IMR-90 (cell line): ENCODE measurements at regions of chr4 and their contacts with region 1.

Region 1: DNA sequence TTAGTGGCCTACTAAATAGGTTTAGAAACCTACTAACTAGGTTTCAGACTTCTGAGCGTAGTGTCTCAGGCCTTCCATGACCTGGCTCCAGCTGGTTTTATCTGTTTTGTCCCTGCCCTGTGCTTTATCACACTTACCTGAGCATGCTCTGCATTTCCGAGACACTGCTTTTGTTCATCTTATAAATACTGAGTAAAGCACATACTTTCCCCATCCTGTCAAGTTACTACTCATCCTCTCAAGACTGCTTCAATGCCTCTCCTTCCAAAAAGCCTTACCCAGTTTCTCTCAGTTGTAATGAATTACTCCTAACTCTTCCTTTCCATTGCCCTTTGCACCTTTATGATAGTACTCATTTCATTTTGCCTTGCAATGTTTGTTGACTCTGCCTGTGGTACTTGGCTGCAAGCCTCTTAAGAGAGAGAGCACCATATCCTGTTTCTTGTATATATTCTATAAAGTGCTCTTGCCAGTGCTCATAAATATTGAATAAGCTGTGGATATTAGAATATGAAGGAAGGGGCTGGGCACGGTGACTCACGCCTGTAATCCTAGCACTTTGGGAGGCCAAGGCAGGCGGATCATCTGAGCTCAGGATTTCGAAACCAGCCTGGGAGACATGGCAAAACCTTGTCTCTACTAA is 34.4 kb downstream of the SLAIN2 start:
- DNase-seq: peak; percentile 96
- ATAC-seq: peak; percentile 94
- H3K4me3 ChIP-seq: no peak overlapping the region
- H3K27ac ChIP-seq: peak overlapping the region; percentile 56; the same call in 1 of the 2 replicates
- H3K4me1 ChIP-seq: peaks cover 2% of the 10 kb centered on the region; the same call in 1 of the 2 replicates
- H3K27me3 ChIP-seq: no peaks in the 10 kb centered on the region
- CTCF ChIP-seq: no peak
- POLR2A ChIP-seq: no peak
- RAD21 ChIP-seq: no peak

Region 2: GRCh38 chr4:47852136-47852535 is 523.6 kb before region 1 on chr4:
- CTCF ChIA-PET with region 1: no interaction called
- POLR2A ChIA-PET with region 1: no interaction called
- dilution Hi-C with region 1: no loop called
- in situ Hi-C with region 1: loop called (anchors 25 kb)
- intact Hi-C with region 1: loop called (anchors 5 kb)
- DNase-seq: peak; percentile 92
- ATAC-seq: peak; percentile 86
- H3K4me3 ChIP-seq: no peak overlapping the region
- H3K27ac ChIP-seq: no peak overlapping the region
- H3K4me1 ChIP-seq: no peaks in the 10 kb centered on the region
- H3K27me3 ChIP-seq: no peaks in the 10 kb centered on the region
- CTCF ChIP-seq: no peak
- POLR2A ChIP-seq: no peak
- RAD21 ChIP-seq: no peak

Region 3: GRCh38 chr4:48360285-48361010 is 15.3 kb before region 1 on chr4:
- CTCF ChIA-PET with region 1: no interaction called
- POLR2A ChIA-PET with region 1: no interaction called
- dilution Hi-C with region 1: no loop called
- in situ Hi-C with region 1: no loop called
- intact Hi-C with region 1: no loop called
- DNase-seq: peak; percentile 86
- ATAC-seq: peak; percentile 98
- H3K4me3 ChIP-seq: no peak overlapping the region
- H3K27ac ChIP-seq: peak overlapping the region; percentile 49
- H3K4me1 ChIP-seq: peaks cover 5% of the 10 kb centered on the region
- H3K27me3 ChIP-seq: no peaks in the 10 kb centered on the region
- CTCF ChIP-seq: no peak
- POLR2A ChIP-seq: no peak
- RAD21 ChIP-seq: no peak

Region 4: GRCh38 chr4:48403358-48403757 is 27.6 kb after region 1 on chr4:
- CTCF ChIA-PET with region 1: no interaction called
- POLR2A ChIA-PET with region 1: interaction called, 6 read pairs
- dilution Hi-C with region 1: no loop called
- in situ Hi-C with region 1: no loop called
- intact Hi-C with region 1: loop called (anchors 1 kb)
- DNase-seq: no peak
- ATAC-seq: no peak
- H3K4me3 ChIP-seq: no peak overlapping the region
- H3K27ac ChIP-seq: no peak overlapping the region
- H3K4me1 ChIP-seq: no peaks in the 10 kb centered on the region; the same call in 1 of the 2 replicates
- H3K27me3 ChIP-seq: no peaks in the 10 kb centered on the region
- CTCF ChIP-seq: no peak
- POLR2A ChIP-seq: no peak
- RAD21 ChIP-seq: no peak

Region 5: GRCh38 chr4:48483006-48483776 is 107.4 kb after region 1 on chr4 and contains the start of gene SLC10A4:
- CTCF ChIA-PET with region 1: no interaction called
- POLR2A ChIA-PET with region 1: no interaction called
- dilution Hi-C with region 1: no loop called
- in situ Hi-C with region 1: loop called (anchors 25 kb)
- intact Hi-C with region 1: no loop called
- DNase-seq: no peak
- ATAC-seq: peak; percentile 46; the same call in 1 of the 2 replicates
- H3K4me3 ChIP-seq: peak within 1 kb of the TSS; percentile 45
- H3K27ac ChIP-seq: no peak within 1 kb of the TSS
- H3K4me1 ChIP-seq: peaks cover 5% of the 10 kb centered on the region
- H3K27me3 ChIP-seq: peaks cover 57% of the 10 kb centered on the region
- CTCF ChIP-seq: no peak
- POLR2A ChIP-seq: no peak
- RAD21 ChIP-seq: no peak
- total RNA-seq, gene SLC10A4: not detected in 2 replicates